Psoas muscle (tissue), 8 donors: ENCODE measurements at regions of chr11 and their contacts with region 1.

Region 1: GRCh38 chr11:16341853-16342252 is 14.5 kb downstream of the SOX6 start:
- DNase-seq: no peak
- ATAC-seq: no peak
- H3K4me3 ChIP-seq: no peak overlapping the region
- H3K27ac ChIP-seq: no peak overlapping the region
- H3K4me1 ChIP-seq: peaks cover 28% of the 10 kb centered on the region
- H3K27me3 ChIP-seq: no peaks in the 10 kb centered on the region
- CTCF ChIP-seq: no peak

Region 2: GRCh38 chr11:16299884-16300782 is 41.7 kb before region 1 on chr11:
- intact Hi-C with region 1: loop called (anchors 5 kb)
- DNase-seq: no peak
- ATAC-seq: peak in 2 of 4 donors; percentile 44 to 66
- H3K4me3 ChIP-seq: no peak overlapping the region
- H3K27ac ChIP-seq: peak overlapping the region; percentile 84
- H3K4me1 ChIP-seq: peaks cover 61% of the 10 kb centered on the region
- H3K27me3 ChIP-seq: no peaks in the 10 kb centered on the region
- CTCF ChIP-seq: no peak